SK-N-SH (cell line): ENCODE measurements at regions of chr22 and their contacts with region 1.

Region 1: GRCh38 chr22:17106785-17107546 is 14.2 kb downstream of the TMEM121B start:
- DNase-seq: no peak
- H3K4me3 ChIP-seq: no peak overlapping the region
- H3K27ac ChIP-seq: no peak overlapping the region
- H3K4me1 ChIP-seq: no peaks in the 10 kb centered on the region
- H3K27me3 ChIP-seq: no peaks in the 10 kb centered on the region
- CTCF ChIP-seq: no peak
- EP300 ChIP-seq: no peak
- RAD21 ChIP-seq: no peak

Region 2: GRCh38 chr22:17047656-17048055 is 59.3 kb before region 1 on chr22:
- CTCF ChIA-PET with region 1: no interaction called
- POLR2A ChIA-PET with region 1: no interaction called
- DNase-seq: no peak
- H3K4me3 ChIP-seq: no peak overlapping the region
- H3K27ac ChIP-seq: no peak overlapping the region
- H3K4me1 ChIP-seq: no peaks in the 10 kb centered on the region
- H3K27me3 ChIP-seq: peaks cover 5% of the 10 kb centered on the region; the same call in 1 of the 2 replicates
- CTCF ChIP-seq: no peak
- EP300 ChIP-seq: no peak
- RAD21 ChIP-seq: no peak

Region 3: GRCh38 chr22:17095538-17095937 is 11.4 kb before region 1 on chr22:
- CTCF ChIA-PET with region 1: interaction called, 11 read pairs
- POLR2A ChIA-PET with region 1: no interaction called
- DNase-seq: peak; percentile 61
- H3K4me3 ChIP-seq: no peak overlapping the region
- H3K27ac ChIP-seq: no peak overlapping the region
- H3K4me1 ChIP-seq: no peaks in the 10 kb centered on the region
- H3K27me3 ChIP-seq: no peaks in the 10 kb centered on the region
- CTCF ChIP-seq: peak; percentile 44
- EP300 ChIP-seq: no peak
- RAD21 ChIP-seq: no peak